ENCODE measurements at regions of chr1 and their contacts with region 1.

Region 1: DNA sequence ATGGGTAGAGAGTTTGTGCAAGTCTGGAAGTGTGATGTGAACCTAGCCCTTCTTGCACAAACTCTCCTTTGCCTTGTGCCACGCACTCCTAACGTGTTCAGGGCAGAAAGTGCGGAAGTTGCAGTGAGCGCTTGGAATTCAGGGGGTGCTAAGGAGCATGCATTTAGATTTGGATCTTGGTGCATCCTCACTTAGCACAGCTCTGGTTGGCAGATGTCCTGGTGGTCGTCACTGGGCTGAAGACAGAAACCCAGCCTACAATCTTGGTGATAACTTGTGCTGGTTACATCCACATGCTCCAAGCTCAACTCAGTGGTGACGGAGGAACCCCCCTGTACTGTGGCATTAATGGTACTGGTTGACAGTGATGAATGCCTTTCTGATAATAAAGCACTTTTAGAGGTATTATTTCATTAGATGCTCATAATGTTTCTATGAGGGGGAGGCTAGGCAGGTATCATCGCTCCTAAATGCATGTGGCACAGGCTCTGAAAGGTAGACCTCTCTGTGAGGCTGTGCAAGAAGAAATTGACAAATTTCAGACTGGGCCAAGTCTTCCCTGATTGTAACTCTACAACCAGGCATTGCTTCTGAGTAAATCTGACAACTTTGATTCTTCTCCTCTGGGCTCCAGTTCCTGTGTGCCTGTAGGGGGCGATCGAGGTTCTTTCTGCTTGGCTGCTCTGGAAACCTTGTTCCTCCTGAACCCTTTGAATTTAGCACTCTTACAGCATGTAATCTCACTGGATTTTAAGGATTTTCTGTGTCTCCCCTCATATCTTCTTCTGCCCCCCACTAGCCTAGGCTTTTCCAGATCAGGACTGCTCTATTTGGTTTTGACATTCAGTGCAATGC is 40.6 kb downstream of the MAPKAPK2 start:
- DNase-seq: no peak
- ATAC-seq: no peak
- H3K4me3 ChIP-seq: no peak overlapping the region
- H3K27ac ChIP-seq: peak overlapping the region; percentile 87
- H3K4me1 ChIP-seq: peaks cover 70% of the 10 kb centered on the region
- H3K27me3 ChIP-seq: no peaks in the 10 kb centered on the region
- CTCF ChIP-seq: peak; percentile 47

Region 2: DNA sequence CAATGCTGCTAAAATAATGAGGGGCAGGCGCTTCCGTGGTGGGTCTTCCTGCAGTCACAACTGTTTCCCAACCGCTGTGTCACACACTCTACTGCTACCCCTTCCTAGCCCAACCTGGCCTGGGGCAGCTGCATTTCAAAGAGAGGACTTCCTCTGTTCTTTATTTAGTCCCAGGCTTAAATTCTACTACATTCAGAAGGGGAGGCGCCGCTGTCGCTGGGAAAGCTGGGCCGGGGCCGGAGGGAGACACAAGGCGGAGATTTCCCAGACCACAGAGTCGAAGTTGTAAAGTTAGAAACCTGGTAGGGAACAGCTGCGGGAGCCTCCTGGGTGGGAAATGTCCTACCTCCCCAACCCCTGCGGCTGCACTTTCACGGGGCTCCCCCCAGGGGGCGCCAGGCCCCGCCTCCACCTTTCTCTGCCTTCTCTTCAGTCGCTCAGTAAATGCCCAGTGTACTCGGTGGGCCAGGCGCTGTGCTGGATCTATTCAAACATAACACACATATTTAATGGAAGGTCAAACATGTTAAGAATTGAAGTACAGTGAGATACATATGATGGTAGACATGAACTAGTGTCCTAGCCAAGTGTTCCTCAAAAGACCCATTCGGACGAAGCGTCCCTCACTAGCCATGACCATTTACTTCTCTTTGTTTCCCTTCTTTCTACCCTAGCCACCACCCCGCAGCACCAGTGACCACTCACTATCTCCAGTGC is 66.9 kb before region 1 on chr1:
- intact Hi-C with region 1: loop called in 1 of 2 experiments (anchors 2 kb)
- DNase-seq: peak; percentile 58 to 82
- ATAC-seq: peak; percentile 85 to 92 (median 88)
- H3K4me3 ChIP-seq: peak overlapping the region; percentile 51
- H3K27ac ChIP-seq: peak overlapping the region; percentile 87
- H3K4me1 ChIP-seq: peaks cover 36% of the 10 kb centered on the region
- H3K27me3 ChIP-seq: no peaks in the 10 kb centered on the region
- CTCF ChIP-seq: peak; percentile 90

Region 3: DNA sequence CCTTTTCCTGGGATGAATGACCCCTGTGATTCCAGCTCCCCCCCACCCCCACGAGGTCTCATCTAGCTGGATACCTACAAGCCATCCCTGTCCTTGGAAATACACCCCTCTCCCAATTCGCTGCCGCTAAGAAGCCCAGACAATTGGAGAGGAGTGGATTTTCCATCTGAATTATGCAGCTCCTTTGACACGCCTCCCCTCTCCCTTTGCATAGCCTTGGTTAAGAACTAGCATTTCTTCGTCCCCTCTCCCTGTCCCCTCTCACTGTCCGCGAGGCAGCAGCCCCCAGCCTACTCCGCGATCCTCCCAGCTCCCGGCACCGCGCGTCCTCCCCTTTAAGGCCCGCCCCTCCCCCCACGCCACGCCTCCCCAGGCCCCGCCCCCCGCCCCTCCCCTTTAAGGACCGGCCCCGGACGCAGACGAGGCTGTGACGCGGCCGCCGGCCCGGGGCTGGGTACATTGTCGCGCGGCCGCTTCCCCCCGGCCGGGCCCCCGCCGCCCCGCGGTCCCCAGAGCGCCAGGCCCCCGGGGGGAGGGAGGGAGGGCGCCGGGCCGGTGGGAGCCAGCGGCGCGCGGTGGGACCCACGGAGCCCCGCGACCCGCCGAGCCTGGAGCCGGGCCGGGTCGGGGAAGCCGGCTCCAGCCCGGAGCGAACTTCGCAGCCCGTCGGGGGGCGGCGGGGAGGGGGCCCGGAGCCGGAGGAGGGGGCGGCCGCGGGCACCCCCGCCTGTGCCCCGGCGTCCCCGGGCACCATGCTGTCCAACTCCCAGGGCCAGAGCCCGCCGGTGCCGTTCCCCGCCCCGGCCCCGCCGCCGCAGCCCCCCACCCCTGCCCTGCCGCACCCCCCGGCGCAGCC is 40.6 kb before region 1 on chr1 and contains the start of gene MAPKAPK2:
- intact Hi-C with region 1: loop called in 1 of 2 experiments (anchors 5 kb)
- DNase-seq: peak; percentile 86 to 90
- ATAC-seq: peak; percentile 78 to 83 (median 80)
- H3K4me3 ChIP-seq: peak within 1 kb of the TSS; percentile 96
- H3K27ac ChIP-seq: peak within 1 kb of the TSS; percentile 98
- H3K4me1 ChIP-seq: peaks cover 41% of the 10 kb centered on the region
- H3K27me3 ChIP-seq: no peaks in the 10 kb centered on the region
- CTCF ChIP-seq: no peak
- total RNA-seq, gene MAPKAPK2: 89.4 to 198 (median 167) TPM

Region 4: DNA sequence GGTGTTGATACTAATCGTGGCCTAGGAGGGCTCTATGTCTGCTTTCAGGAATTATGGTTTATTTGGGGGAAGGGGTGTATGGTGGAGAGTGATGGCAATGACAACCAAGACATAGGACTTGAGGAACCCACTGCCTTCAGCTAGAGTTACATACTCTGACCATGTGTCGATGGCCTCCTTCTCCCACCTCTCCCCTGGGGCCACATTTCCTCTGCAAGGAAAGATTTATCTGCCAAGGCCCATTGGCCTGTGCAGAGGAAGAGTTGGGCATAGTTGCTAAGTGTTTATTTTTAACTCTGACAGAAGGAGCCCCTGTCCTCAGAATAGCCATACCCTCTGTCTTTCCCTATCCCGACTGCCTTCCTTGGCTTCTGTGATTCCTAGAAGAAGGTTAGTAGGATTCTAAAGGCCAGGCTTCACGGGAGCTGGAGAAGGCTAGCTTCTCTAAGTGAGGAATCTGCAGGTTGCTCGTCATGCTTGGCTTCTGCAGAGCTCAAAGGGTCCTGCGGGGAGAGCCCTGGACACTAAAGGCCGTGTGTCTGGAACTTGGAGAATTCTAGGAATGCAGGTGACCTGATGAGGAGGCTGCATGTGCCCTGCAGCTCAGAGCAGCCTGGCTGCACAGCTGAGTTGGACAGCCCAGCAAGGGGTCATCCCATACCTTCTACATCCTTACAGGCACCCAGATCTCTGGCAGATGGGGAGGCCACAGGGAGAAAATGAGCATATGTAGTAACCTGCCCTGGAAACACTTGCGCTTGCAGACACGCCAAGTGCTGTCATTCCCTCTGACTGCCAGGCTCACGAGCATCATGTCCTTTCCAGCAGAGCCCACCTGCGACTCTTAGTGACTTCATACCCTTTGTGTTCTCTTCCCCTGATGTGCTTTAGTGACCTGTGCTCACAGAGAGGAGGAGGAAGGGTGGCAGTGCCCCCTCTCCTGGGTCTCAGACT is 30.9 kb before region 1 on chr1:
- intact Hi-C with region 1: loop called (anchors 2 to 5 kb)
- DNase-seq: no peak
- ATAC-seq: peak; percentile 7 to 41 (median 26)
- H3K4me3 ChIP-seq: peak overlapping the region; percentile 52
- H3K27ac ChIP-seq: peak overlapping the region; percentile 98
- H3K4me1 ChIP-seq: peaks cover 100% of the 10 kb centered on the region
- H3K27me3 ChIP-seq: no peaks in the 10 kb centered on the region
- CTCF ChIP-seq: no peak

Region 5: DNA sequence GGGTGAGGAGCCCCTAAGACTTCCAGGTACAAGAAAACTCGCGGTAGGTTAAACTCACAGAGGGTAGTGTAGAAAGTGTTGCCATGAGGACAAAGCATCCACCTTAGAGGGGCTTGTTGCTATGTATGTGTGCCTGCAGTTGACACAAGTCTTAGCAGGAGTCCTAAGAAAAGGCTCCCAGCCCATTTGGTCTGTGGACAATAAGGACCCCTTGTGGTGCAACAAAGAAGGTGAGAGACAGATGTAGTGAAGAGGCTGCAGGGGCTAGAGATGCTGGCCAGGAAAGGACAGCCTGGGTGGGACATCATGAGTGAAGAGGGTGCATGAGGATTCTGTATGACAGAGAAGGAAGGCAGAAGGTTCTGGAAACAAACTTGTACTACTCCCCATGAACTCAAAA is 83.3 kb after region 1 on chr1:
- intact Hi-C with region 1: loop called in 1 of 2 experiments (anchors 5 kb)
- DNase-seq: no peak
- ATAC-seq: peak; percentile 49 to 86 (median 76)
- H3K4me3 ChIP-seq: no peak overlapping the region
- H3K27ac ChIP-seq: no peak overlapping the region
- H3K4me1 ChIP-seq: no peaks in the 10 kb centered on the region
- H3K27me3 ChIP-seq: no peaks in the 10 kb centered on the region
- CTCF ChIP-seq: peak; percentile 51